ENCODE measurements at regions of chr20 and their contacts with region 1.

Region 1: DNA sequence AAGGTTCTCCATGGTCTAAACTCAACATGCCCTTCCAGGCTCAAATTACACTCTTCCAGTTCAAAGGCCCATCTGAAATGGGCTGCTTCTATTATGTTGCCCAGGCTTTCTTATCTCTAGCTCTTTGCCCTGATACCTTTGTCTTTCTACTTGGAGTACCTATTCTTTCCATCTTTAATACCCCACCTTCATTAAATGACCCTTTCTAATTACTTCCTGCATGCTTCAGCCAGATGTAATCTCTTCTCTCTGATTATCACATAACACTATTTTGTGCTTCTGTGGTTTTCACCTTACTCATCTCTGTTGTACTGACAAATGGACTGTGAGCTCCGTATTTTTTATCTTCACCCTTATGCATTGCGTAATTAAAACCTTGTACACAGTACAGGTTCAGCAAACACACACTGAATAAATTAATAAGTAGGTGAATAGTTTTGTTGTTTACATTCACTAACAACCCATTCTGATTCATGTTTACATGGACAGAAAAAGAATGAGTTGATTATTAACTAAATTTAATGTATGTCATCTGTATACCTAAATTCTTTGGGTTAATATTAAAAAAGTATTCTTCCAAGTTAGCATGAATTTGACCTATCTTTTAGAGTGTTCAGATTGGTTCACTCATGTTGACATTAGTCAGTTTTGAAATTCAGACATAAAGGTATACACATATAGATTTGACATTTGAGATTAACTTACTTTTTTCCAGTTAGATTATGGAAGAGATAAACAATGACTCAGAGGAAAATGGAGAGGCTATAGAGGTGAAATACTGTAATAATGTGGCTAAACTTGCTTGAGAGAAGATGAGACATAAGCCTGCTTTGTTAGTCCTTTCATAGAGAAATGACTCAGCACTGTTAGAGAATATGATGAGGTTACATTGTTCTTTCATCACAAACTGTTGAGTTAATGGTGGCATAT is 541.6 kb upstream of the FLRT3 start:
- DNase-seq: no peak
- ATAC-seq: no peak
- H3K4me3 Mint-ChIP-seq: no peak overlapping the region
- H3K27ac Mint-ChIP-seq: no peak overlapping the region
- H3K4me1 Mint-ChIP-seq: peaks cover 5% of the 10 kb centered on the region
- H3K27me3 Mint-ChIP-seq: peaks cover 4% of the 10 kb centered on the region
- CTCF ChIP-seq: no peak

Region 2: GRCh38 chr20:14582855-14583254 is 296.2 kb before region 1 on chr20:
- CTCF ChIA-PET with region 1: no interaction called
- POLR2A ChIA-PET with region 1: no interaction called
- intact Hi-C with region 1: no loop called
- DNase-seq: no peak
- ATAC-seq: no peak
- H3K4me3 Mint-ChIP-seq: no peak overlapping the region
- H3K27ac Mint-ChIP-seq: no peak overlapping the region
- H3K4me1 Mint-ChIP-seq: no peaks in the 10 kb centered on the region
- H3K27me3 Mint-ChIP-seq: peaks cover 2% of the 10 kb centered on the region
- CTCF ChIP-seq: no peak

Region 3: GRCh38 chr20:14838663-14839628 is 40.1 kb before region 1 on chr20:
- CTCF ChIA-PET with region 1: no interaction called
- POLR2A ChIA-PET with region 1: no interaction called
- intact Hi-C with region 1: loop called (anchors 1 kb)
- DNase-seq: no peak
- ATAC-seq: no peak
- H3K4me3 Mint-ChIP-seq: no peak overlapping the region
- H3K27ac Mint-ChIP-seq: no peak overlapping the region
- H3K4me1 Mint-ChIP-seq: no peaks in the 10 kb centered on the region
- H3K27me3 Mint-ChIP-seq: peaks cover 11% of the 10 kb centered on the region
- CTCF ChIP-seq: no peak

Region 4: DNA sequence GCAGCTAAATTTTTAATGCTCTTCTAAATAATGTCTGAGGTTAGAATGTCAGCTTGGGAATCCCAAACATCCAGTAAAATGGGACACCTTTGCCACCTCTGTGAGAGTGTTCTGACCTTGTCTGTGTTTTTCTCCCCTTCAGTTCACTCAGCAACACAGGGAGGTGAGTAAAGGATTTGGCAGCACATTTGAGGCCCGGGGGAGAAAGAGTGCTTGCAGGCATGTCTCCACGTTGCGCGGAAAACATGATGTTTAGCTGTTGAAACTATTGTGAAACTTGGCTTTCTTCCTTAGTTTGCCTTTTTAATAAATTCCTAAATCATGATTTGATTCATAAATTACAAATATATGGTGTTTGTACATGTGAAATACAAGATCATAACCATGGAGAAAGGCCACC is 166.2 kb after region 1 on chr20:
- CTCF ChIA-PET with region 1: no interaction called
- POLR2A ChIA-PET with region 1: no interaction called
- intact Hi-C with region 1: no loop called
- DNase-seq: no peak
- ATAC-seq: no peak
- H3K4me3 Mint-ChIP-seq: no peak overlapping the region
- H3K27ac Mint-ChIP-seq: no peak overlapping the region
- H3K4me1 Mint-ChIP-seq: no peaks in the 10 kb centered on the region
- H3K27me3 Mint-ChIP-seq: no peaks in the 10 kb centered on the region
- CTCF ChIP-seq: no peak